SK-N-SH (cell line): ENCODE measurements at regions of chr12 and their contacts with region 1.

Region 1: GRCh38 chr12:1795785-1796514 is 24.4 kb upstream of the LRTM2 start:
- DNase-seq: peak; percentile 98
- H3K4me3 ChIP-seq: no peak overlapping the region
- H3K27ac ChIP-seq: peak overlapping the region in 1 of 2 experiments; percentile 34; a peak in 1 of 4 replicates
- H3K4me1 ChIP-seq: peaks cover 0 to 29% of the 10 kb centered on the region in 2 experiments; a peak in 1 of 4 replicates
- H3K27me3 ChIP-seq: no peaks in the 10 kb centered on the region
- CTCF ChIP-seq: peak; percentile 88
- EP300 ChIP-seq: no peak
- RAD21 ChIP-seq: peak; percentile 98

Region 2: DNA sequence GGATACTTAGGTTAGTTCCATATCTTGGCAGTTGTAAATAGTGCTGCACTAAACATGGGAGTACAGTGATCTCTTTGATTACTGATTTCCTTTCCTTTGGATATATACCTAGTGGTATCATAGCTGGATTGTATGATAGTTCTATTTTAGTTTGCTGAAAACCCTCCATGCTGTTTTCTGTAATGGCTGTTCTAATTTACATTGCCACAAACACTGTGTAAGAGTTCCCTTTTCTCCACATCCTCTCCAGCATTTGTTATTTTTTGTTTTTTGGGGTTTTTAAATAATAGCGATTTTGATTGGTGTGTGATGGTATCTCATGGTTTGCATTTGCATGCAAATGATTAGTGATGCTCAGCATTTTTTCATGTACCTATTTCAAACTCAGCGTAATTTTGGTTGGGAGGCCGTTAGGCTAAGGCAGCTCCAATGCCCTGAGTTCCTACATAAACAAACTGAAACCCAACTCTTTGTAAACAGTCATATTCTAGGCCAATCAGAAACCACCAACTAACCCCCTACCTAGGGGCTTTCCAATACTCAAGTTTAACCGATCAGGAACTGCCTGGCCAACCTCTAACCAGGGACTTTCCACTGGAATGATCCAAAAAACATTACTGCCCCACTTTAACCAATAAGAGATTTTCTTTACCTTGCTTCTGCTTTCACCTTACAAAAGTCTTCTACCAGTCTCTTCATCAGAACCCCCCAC is 373.2 kb before region 1 on chr12:
- CTCF ChIA-PET with region 1: no interaction called
- POLR2A ChIA-PET with region 1: no interaction called
- DNase-seq: no peak
- H3K4me3 ChIP-seq: no peak overlapping the region
- H3K27ac ChIP-seq: no peak overlapping the region
- H3K4me1 ChIP-seq: no peaks in the 10 kb centered on the region
- H3K27me3 ChIP-seq: no peaks in the 10 kb centered on the region
- CTCF ChIP-seq: no peak
- EP300 ChIP-seq: no peak
- RAD21 ChIP-seq: no peak

Region 3: DNA sequence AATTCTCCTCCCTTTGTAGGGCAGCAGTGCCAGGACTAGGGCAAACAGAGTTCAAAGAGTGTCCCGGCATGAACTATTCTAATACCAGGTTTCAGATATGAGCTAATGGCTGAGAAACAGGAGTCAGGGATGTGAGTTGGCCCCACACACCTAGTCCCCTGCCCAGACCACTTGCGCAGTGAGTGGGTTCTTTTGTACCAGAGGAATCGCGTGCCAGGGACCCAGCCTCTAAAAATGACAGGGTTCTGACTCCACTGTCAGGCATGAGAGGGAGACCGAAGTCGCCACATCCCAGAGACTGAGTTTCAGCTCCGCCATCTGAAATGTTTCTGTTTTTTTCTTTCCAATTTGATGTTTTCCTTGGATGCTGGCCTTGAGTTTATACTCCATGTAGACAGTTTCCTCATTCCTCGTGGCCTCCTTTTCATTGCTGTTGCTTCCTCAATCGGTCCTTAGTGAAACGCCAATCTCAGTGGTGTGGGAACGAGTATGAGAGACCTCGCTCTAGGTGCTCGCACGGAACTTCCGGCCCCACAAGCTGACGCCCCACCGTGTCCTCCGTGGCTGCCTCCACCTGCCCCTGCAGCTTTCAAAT is 233.0 kb before region 1 on chr12:
- CTCF ChIA-PET with region 1: no interaction called
- POLR2A ChIA-PET with region 1: no interaction called
- DNase-seq: no peak
- H3K4me3 ChIP-seq: no peak overlapping the region
- H3K27ac ChIP-seq: no peak overlapping the region; a peak in 1 of 4 replicates
- H3K4me1 ChIP-seq: peaks cover 0 to 12% of the 10 kb centered on the region in 2 experiments; a peak in 1 of 4 replicates
- H3K27me3 ChIP-seq: no peaks in the 10 kb centered on the region
- CTCF ChIP-seq: no peak
- EP300 ChIP-seq: no peak
- RAD21 ChIP-seq: no peak

Region 4: DNA sequence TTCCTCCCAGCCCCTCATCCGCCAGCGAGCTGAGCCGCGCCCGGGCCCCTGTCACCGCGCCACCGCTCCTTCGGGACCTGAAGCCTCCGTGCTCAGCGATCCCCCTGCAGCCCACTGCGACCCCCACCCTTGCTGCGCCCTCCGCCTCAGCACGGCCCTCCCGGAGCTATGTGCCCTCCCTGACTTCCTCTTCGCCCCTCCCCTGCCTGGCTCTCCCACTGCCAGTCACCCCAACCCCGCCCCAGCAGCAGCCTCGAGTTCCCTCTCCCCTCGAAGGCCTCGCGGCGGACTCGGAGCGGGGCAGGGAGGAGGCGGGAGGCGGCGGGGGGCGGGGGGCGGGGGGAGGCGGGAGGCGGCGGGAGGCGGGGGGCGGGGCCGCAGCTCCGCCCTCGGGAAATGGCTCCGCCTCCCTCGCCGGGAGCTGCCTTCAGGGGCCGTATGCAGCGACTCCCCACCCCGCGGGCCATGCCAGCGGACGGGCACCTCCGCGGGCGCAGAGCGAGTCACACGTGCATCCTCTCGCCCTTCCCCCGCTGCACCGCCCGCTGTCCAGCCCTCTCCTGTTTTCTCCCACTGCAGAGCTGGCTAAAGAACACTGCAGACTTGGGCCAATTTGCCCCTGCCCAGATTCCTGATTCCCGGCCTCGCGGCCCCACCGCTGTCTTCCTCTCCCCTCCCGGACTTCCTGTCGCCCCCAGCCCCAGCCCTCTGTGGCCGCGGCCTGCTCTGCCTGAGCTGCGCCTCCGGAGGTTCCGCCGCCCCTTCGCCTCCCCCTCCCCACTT is 134.2 kb before region 1 on chr12:
- CTCF ChIA-PET with region 1: interaction called, 605 read pairs
- POLR2A ChIA-PET with region 1: no interaction called
- DNase-seq: peak; percentile 93
- H3K4me3 ChIP-seq: peak overlapping the region; percentile 52 to 58; a peak in 3 of 4 replicates
- H3K27ac ChIP-seq: peak overlapping the region in 1 of 2 experiments; percentile 67; a peak in 2 of 4 replicates
- H3K4me1 ChIP-seq: peaks cover 0 to 2% of the 10 kb centered on the region in 2 experiments; a peak in 1 of 4 replicates
- H3K27me3 ChIP-seq: no peaks in the 10 kb centered on the region
- CTCF ChIP-seq: no peak
- EP300 ChIP-seq: peak in 1 of 2 experiments; percentile 22; a peak in 1 of 4 replicates
- RAD21 ChIP-seq: no peak

Region 5: GRCh38 chr12:1690578-1691122 is 105.3 kb before region 1 on chr12 and contains the start of gene ADIPOR2:
- CTCF ChIA-PET with region 1: interaction called, 38 read pairs
- POLR2A ChIA-PET with region 1: interaction called, 8 read pairs
- DNase-seq: peak; percentile 97
- H3K4me3 ChIP-seq: peak within 1 kb of the TSS; percentile 91 to 99
- H3K27ac ChIP-seq: peak within 1 kb of the TSS; percentile 91 to 94
- H3K4me1 ChIP-seq: peaks cover 3 to 5% of the 10 kb centered on the region in 2 experiments; a peak in 2 of 4 replicates
- H3K27me3 ChIP-seq: no peaks in the 10 kb centered on the region
- CTCF ChIP-seq: no peak
- EP300 ChIP-seq: no peak
- RAD21 ChIP-seq: no peak
- polyA plus RNA-seq, gene ADIPOR2: 17.1 and 19.5 TPM in 2 replicates

Region 6: GRCh38 chr12:1731019-1731687 is 64.8 kb before region 1 on chr12:
- CTCF ChIA-PET with region 1: interaction called, 10 read pairs
- POLR2A ChIA-PET with region 1: no interaction called
- DNase-seq: no peak
- H3K4me3 ChIP-seq: no peak overlapping the region
- H3K27ac ChIP-seq: no peak overlapping the region
- H3K4me1 ChIP-seq: no peaks in the 10 kb centered on the region
- H3K27me3 ChIP-seq: no peaks in the 10 kb centered on the region
- CTCF ChIP-seq: no peak
- EP300 ChIP-seq: no peak
- RAD21 ChIP-seq: no peak

Region 7: GRCh38 chr12:1776170-1776948 is 19.6 kb before region 1 on chr12:
- CTCF ChIA-PET with region 1: interaction called, 38 read pairs
- POLR2A ChIA-PET with region 1: no interaction called
- DNase-seq: peak; percentile 44
- H3K4me3 ChIP-seq: 0 out of 4 replicates have a peak overlapping the region, but pooled peaks of 1 of the 2 experiments have one; percentile 21
- H3K27ac ChIP-seq: peak overlapping the region; percentile 34 to 76; a peak in 3 of 4 replicates
- H3K4me1 ChIP-seq: peaks cover 16 to 56% of the 10 kb centered on the region in 2 experiments
- H3K27me3 ChIP-seq: no peaks in the 10 kb centered on the region
- CTCF ChIP-seq: no peak
- EP300 ChIP-seq: peak in 1 of 2 experiments; percentile 48; a peak in 1 of 4 replicates
- RAD21 ChIP-seq: no peak